ENCODE measurements at regions of chr1 and their contacts with region 1.

Region 1: DNA sequence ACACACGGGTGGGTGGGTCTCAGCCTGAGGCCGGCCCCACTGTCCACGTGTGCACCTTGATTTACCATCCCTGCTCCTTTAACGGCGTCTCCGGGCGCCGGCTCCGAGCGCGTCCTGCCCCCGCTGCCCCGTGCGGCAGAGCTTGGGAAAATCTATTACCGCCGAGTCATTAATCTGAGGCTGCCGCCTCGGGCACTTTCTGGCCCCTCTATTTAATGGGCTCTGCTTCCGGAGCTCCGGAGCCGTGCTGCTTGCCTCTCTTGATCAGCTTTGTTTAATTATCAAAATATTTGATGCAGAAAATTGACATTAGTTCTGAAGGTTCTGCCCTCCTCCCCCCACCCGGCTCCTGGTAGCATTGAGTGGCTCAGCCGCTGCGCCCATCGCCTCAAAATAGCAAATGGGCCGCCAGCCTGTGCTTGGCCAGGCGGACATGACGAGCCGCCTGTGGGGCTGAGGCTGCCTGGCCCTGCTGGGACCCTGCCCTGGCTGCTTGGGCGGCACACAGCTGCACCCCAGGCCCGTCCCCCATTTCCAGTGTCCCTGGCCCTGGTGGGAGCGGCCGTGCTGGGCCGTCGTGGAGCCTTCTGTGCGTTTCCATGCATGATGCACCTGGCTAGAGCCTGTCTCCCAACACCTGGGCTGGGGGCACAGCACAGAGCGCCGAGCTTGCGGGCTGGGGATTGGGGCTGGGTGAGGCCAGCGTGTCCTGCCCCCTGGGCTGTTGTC is 81.6 kb upstream of the TTC34 start:
- DNase-seq: no peak
- ATAC-seq: no peak
- H3K4me3 ChIP-seq: no peak overlapping the region
- H3K27ac ChIP-seq: no peak overlapping the region
- H3K4me1 ChIP-seq: no peaks in the 10 kb centered on the region
- H3K27me3 ChIP-seq: peaks cover 0 to 7% (median 0%) of the 10 kb centered on the region in 9 donors
- CTCF ChIP-seq: no peak
- POLR2A ChIP-seq: no peak

Region 2: GRCh38 chr1:3417082-3417739 is 534.1 kb after region 1 on chr1:
- intact Hi-C with region 1: loop called in 5 of 10 experiments (anchors 5 to 10 kb)
- DNase-seq: no peak
- ATAC-seq: no peak
- H3K4me3 ChIP-seq: no peak overlapping the region
- H3K27ac ChIP-seq: peak overlapping the region in 1 of 12 donors; percentile 87
- H3K4me1 ChIP-seq: peaks cover 0 to 40% (median 18%) of the 10 kb centered on the region in 12 donors
- H3K27me3 ChIP-seq: no peaks in the 10 kb centered on the region
- CTCF ChIP-seq: peak in 8 of 12 donors; percentile 6 to 43 (median 20)
- POLR2A ChIP-seq: no peak

Measured in heart left ventricle (tissue), 16 donors.